ENCODE measurements at regions of chr12 and their contacts with region 1.

Region 1: DNA sequence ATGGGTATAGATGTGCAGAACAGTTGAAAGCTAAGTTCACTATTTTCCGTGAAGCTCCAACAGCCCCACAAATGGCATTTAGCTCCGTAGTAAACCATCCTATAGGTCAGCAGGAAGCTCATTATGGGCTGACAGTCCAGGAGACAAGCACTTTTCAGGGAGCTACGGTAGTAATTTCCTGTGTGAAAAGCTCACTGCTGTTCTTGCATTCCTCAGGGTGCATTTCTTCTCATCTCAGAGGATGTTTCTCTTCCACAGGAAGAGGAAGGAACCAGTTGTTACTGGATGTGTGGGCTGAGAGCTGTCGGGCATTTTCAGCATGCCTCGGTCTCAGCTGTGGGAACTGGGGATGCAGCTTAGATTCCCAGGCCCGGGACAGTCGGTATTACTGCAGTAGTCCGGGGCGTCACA is 72.8 kb downstream of the GALNT4 start:
- DNase-seq: no peak
- ATAC-seq: peak; percentile 83
- H3K4me3 ChIP-seq: no peak overlapping the region
- H3K27ac ChIP-seq: peak overlapping the region; percentile 84
- H3K4me1 ChIP-seq: peaks cover 44% of the 10 kb centered on the region
- H3K27me3 ChIP-seq: no peaks in the 10 kb centered on the region
- CTCF ChIP-seq: no peak

Region 2: GRCh38 chr12:88383405-88383804 is 1068.4 kb before region 1 on chr12:
- intact Hi-C with region 1: no loop called
- DNase-seq: no peak
- ATAC-seq: no peak
- H3K4me3 ChIP-seq: no peak overlapping the region
- H3K27ac ChIP-seq: no peak overlapping the region
- H3K4me1 ChIP-seq: no peaks in the 10 kb centered on the region
- H3K27me3 ChIP-seq: no peaks in the 10 kb centered on the region
- CTCF ChIP-seq: no peak

Region 3: GRCh38 chr12:89352492-89353187 is 99.2 kb before region 1 on chr12 and contains the start of gene DUSP6:
- intact Hi-C with region 1: loop called (anchors 10 kb)
- DNase-seq: peak; percentile 97
- ATAC-seq: peak; percentile 76
- H3K4me3 ChIP-seq: peak within 1 kb of the TSS; percentile 72
- H3K27ac ChIP-seq: peak within 1 kb of the TSS; percentile 99
- H3K4me1 ChIP-seq: peaks cover 37% of the 10 kb centered on the region
- H3K27me3 ChIP-seq: no peaks in the 10 kb centered on the region
- CTCF ChIP-seq: no peak
- total RNA-seq, gene DUSP6: 110 TPM

Region 4: GRCh38 chr12:90028635-90029051 is 576.8 kb after region 1 on chr12:
- intact Hi-C with region 1: no loop called
- DNase-seq: no peak
- ATAC-seq: no peak
- H3K4me3 ChIP-seq: no peak overlapping the region
- H3K27ac ChIP-seq: no peak overlapping the region
- H3K4me1 ChIP-seq: peaks cover 4% of the 10 kb centered on the region
- H3K27me3 ChIP-seq: no peaks in the 10 kb centered on the region
- CTCF ChIP-seq: no peak